ENCODE measurements at regions of chr2 and their contacts with region 1.

Region 1: GRCh38 chr2:113203901-113204519 is 30.2 kb downstream of the PSD4 start:
- DNase-seq: peak; percentile 80
- ATAC-seq: peak; percentile 78
- H3K4me3 ChIP-seq: no peak overlapping the region
- H3K27ac ChIP-seq: no peak overlapping the region
- H3K4me1 ChIP-seq: peaks cover 69% of the 10 kb centered on the region
- H3K27me3 ChIP-seq: no peaks in the 10 kb centered on the region
- CTCF ChIP-seq: peak; percentile 100
- EP300 ChIP-seq: no peak
- POLR2A ChIP-seq: no peak
- RAD21 ChIP-seq: peak; percentile 98

Region 2: GRCh38 chr2:112529757-112530156 is 674.3 kb before region 1 on chr2:
- CTCF ChIA-PET with region 1: no interaction called
- POLR2A ChIA-PET with region 1: no interaction called
- in situ Hi-C with region 1: no loop called
- intact Hi-C with region 1: no loop called
- DNase-seq: no peak
- ATAC-seq: no peak
- H3K4me3 ChIP-seq: no peak overlapping the region
- H3K27ac ChIP-seq: no peak overlapping the region
- H3K4me1 ChIP-seq: no peaks in the 10 kb centered on the region
- H3K27me3 ChIP-seq: no peaks in the 10 kb centered on the region
- CTCF ChIP-seq: no peak
- EP300 ChIP-seq: no peak
- POLR2A ChIP-seq: no peak
- RAD21 ChIP-seq: no peak

Region 3: DNA sequence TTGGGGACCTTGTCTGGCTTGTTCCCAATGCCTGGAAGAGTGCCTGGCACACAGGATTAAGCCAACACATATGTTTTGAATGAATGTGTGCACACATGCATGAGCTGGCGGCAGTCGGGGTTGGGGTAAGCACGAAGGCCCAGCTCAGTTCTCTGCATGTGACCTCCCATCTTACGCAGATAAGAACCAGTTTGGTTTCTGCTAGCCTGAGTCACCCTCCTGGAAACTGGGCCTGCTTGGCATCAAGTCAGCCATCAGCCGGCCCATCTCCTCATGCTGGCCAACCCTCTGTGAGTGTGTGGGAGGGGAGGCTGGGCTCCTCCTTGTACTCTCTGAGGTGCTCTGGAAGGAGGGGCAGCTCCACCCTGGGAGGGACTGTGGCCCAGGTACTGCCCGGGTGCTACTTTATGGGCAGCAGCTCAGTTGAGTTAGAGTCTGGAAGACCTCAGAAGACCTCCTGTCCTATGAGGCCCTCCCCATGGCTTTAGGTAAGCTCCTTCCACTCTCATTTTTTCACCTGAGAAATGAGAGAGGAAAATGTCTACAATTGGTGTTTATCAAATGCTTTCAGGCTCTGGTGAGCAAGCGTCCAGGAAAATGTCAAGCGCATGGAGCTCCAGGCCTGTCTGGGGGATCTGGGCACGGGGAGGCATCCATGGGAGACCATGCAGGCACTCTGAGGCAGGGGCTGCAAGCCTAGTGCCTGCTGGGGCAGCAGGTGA is 86.3 kb before region 1 on chr2:
- CTCF ChIA-PET with region 1: no interaction called
- POLR2A ChIA-PET with region 1: no interaction called
- in situ Hi-C with region 1: no loop called
- intact Hi-C with region 1: no loop called
- DNase-seq: no peak
- ATAC-seq: no peak
- H3K4me3 ChIP-seq: no peak overlapping the region
- H3K27ac ChIP-seq: no peak overlapping the region
- H3K4me1 ChIP-seq: peaks cover 48% of the 10 kb centered on the region
- H3K27me3 ChIP-seq: peaks cover under 1 to 41% of the 10 kb centered on the region in 2 experiments; a peak in 4 of 5 replicates
- CTCF ChIP-seq: no peak
- EP300 ChIP-seq: no peak
- POLR2A ChIP-seq: no peak
- RAD21 ChIP-seq: no peak

Region 4: GRCh38 chr2:113233593-113234550 is 29.9 kb after region 1 on chr2:
- CTCF ChIA-PET with region 1: interaction called, 3 read pairs
- POLR2A ChIA-PET with region 1: interaction called, 5 read pairs
- in situ Hi-C with region 1: no loop called
- intact Hi-C with region 1: loop called (anchors 2 kb)
- DNase-seq: peak; percentile 32
- ATAC-seq: peak; percentile 94
- H3K4me3 ChIP-seq: 0 out of 6 replicates have a peak overlapping the region, but pooled peaks of 2 of the 3 experiments have one; percentile 1 to 17
- H3K27ac ChIP-seq: no peak overlapping the region
- H3K4me1 ChIP-seq: peaks cover 59% of the 10 kb centered on the region
- H3K27me3 ChIP-seq: 0 out of 5 replicates have a peak, but pooled peaks cover 0 to 5% of the 10 kb centered on the region in 2 experiments
- CTCF ChIP-seq: peak; percentile 49
- EP300 ChIP-seq: no peak
- POLR2A ChIP-seq: no peak
- RAD21 ChIP-seq: 0 out of 2 replicates have a peak, but pooled peaks have one; percentile 9

Region 5: GRCh38 chr2:113248997-113249770 is 45.2 kb after region 1 on chr2:
- CTCF ChIA-PET with region 1: interaction called, 26 read pairs
- POLR2A ChIA-PET with region 1: interaction called, 6 read pairs
- in situ Hi-C with region 1: loop called (anchors 5 kb)
- intact Hi-C with region 1: loop called (anchors 1 kb)
- DNase-seq: peak; percentile 72
- ATAC-seq: peak; percentile 82
- H3K4me3 ChIP-seq: no peak overlapping the region
- H3K27ac ChIP-seq: no peak overlapping the region
- H3K4me1 ChIP-seq: peaks cover 44% of the 10 kb centered on the region
- H3K27me3 ChIP-seq: no peaks in the 10 kb centered on the region; a peak in 1 of 5 replicates
- CTCF ChIP-seq: peak; percentile 98
- EP300 ChIP-seq: peak in 1 of 2 experiments; percentile 46; a peak in 1 of 4 replicates
- POLR2A ChIP-seq: no peak
- RAD21 ChIP-seq: peak; percentile 97

Region 6: DNA sequence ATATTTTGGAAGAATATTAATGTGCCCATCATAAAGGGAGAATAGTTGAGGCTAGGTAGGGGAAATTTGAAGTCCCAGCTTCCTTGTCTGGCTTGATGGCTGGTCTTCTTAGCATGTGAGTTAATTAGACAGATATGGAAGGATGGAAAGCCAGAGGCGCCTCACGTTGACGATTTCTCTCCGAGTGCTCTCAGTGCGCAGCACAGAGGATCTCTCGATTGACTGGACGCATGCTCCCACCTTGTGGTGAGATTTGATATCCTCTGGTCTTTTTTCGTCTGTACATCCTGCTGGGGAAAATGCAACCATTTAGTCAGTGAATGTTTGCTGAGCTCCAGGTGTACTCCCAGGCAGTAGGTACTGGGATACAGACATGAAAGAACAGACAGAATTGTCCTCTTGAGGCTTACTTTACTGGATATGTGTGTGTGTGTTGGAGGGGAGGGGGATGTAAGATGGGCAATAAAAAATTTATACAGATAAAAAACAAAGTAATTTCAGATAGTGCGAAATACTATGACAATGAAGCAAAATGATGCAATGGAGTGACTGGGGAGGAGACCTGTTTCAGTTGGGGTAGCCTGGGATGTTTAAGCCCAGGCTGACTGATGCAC is 166.6 kb after region 1 on chr2:
- CTCF ChIA-PET with region 1: interaction called, 35 read pairs
- POLR2A ChIA-PET with region 1: no interaction called
- in situ Hi-C with region 1: no loop called
- intact Hi-C with region 1: loop called (anchors 1 kb)
- DNase-seq: peak; percentile 80
- ATAC-seq: peak; percentile 99
- H3K4me3 ChIP-seq: no peak overlapping the region
- H3K27ac ChIP-seq: no peak overlapping the region
- H3K4me1 ChIP-seq: peaks cover 8% of the 10 kb centered on the region
- H3K27me3 ChIP-seq: no peaks in the 10 kb centered on the region
- CTCF ChIP-seq: peak; percentile 94
- EP300 ChIP-seq: no peak
- POLR2A ChIP-seq: no peak
- RAD21 ChIP-seq: peak; percentile 95

Measured in HepG2 (cell line).